ENCODE measurements at regions of chr3 and their contacts with region 1.

Region 1: GRCh38 chr3:44477312-44478030 is at the start of gene ZNF445:
- DNase-seq: peak; percentile 46 to 89 (median 73)
- ATAC-seq: peak; percentile 87
- H3K4me3 ChIP-seq: peak within 1 kb of the TSS; percentile 48 to 62
- H3K4me3 Mint-ChIP-seq: peak within 1 kb of the TSS; percentile 95
- H3K27ac ChIP-seq: peak within 1 kb of the TSS; percentile 8 to 16
- H3K27ac Mint-ChIP-seq: peak within 1 kb of the TSS; percentile 87
- H3K4me1 ChIP-seq: peaks cover 16% of the 10 kb centered on the region
- H3K4me1 Mint-ChIP-seq: peaks cover 42% of the 10 kb centered on the region
- H3K27me3 ChIP-seq: no peaks in the 10 kb centered on the region
- H3K27me3 Mint-ChIP-seq: no peaks in the 10 kb centered on the region
- CTCF ChIP-seq: no peak
- total RNA-seq, gene ZNF445: 4.8 to 5.2 TPM

Region 2: GRCh38 chr3:44323341-44323955 is 154.0 kb before region 1 on chr3:
- CTCF ChIA-PET with region 1: no interaction called
- POLR2A ChIA-PET with region 1: no interaction called
- intact Hi-C with region 1: loop called in 1 of 2 experiments (anchors 5 kb)
- DNase-seq: peak; percentile 6 to 68 (median 58)
- ATAC-seq: no peak
- H3K4me3 ChIP-seq: no peak overlapping the region
- H3K4me3 Mint-ChIP-seq: no peak overlapping the region
- H3K27ac ChIP-seq: no peak overlapping the region
- H3K27ac Mint-ChIP-seq: no peak overlapping the region
- H3K4me1 ChIP-seq: no peaks in the 10 kb centered on the region
- H3K4me1 Mint-ChIP-seq: no peaks in the 10 kb centered on the region
- H3K27me3 ChIP-seq: peaks cover 0 to 3% of the 10 kb centered on the region in 2 experiments
- H3K27me3 Mint-ChIP-seq: peaks cover 9% of the 10 kb centered on the region
- CTCF ChIP-seq: peak; percentile 86

Region 3: GRCh38 chr3:44439499-44440295 is 37.8 kb before region 1 on chr3:
- CTCF ChIA-PET with region 1: no interaction called
- POLR2A ChIA-PET with region 1: no interaction called
- intact Hi-C with region 1: loop called in 1 of 2 experiments (anchors 2 kb)
- DNase-seq: peak; percentile 24 to 91 (median 58)
- ATAC-seq: peak; percentile 86
- H3K4me3 ChIP-seq: peak overlapping the region in 1 of 2 experiments; percentile 33
- H3K4me3 Mint-ChIP-seq: peak overlapping the region; percentile 68
- H3K27ac ChIP-seq: peak overlapping the region; percentile 45 to 84
- H3K27ac Mint-ChIP-seq: peak overlapping the region; percentile 92
- H3K4me1 ChIP-seq: peaks cover 19% of the 10 kb centered on the region
- H3K4me1 Mint-ChIP-seq: peaks cover 31% of the 10 kb centered on the region
- H3K27me3 ChIP-seq: no peaks in the 10 kb centered on the region
- H3K27me3 Mint-ChIP-seq: no peaks in the 10 kb centered on the region
- CTCF ChIP-seq: no peak

Region 4: DNA sequence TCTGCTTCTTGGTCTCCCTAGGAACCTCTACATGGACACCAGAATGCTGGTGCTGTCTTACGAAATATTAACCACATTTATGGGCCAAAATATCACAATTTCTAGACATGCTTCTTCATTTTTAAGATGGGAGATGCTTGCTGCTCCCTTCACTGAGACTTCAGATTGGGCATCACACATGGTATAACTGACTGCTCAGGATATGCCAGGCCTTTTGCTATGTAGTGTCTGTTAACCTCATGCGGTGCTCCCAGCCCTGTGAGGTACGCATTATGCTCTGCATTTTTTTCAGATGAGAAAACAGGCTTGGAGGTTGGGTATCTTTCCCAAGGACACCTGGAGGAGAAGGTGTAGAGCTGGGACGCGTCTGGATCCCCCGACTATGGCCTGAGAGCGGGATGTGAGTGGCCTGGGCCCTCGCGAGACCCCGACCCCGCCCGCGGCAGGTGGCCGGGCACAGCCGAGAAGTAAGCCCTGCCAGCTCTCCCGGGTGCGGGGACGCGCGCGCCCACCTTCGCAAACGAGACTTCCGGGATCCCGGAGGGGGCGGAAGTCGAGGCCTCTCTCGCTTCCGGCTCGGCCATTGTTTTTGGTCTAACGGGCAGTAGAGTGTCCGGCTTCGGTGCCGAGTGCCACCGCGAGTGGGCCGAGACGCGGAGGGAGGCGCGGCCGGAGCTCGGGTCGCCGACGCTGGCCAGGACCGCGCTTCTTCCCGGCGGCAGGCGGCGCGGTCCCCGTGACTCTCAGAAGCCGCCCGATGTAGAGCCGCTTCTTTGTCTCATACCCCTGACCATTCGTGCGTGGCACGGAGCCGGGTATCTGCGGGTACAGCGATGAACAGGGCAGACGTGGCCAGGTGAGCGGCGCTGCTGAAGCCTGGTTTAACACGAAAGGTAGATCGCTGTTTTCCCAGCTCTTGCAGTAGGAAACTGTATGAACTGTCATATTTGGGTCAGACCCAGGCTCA is 77.4 kb after region 1 on chr3 and contains the start of gene ZKSCAN7:
- CTCF ChIA-PET with region 1: no interaction called
- POLR2A ChIA-PET with region 1: no interaction called
- intact Hi-C with region 1: loop called in 1 of 2 experiments (anchors 2 kb)
- DNase-seq: peak; percentile 20 to 79 (median 51)
- ATAC-seq: peak; percentile 74
- H3K4me3 ChIP-seq: peak within 1 kb of the TSS; percentile 76 to 88
- H3K4me3 Mint-ChIP-seq: peak within 1 kb of the TSS; percentile 93
- H3K27ac ChIP-seq: peak within 1 kb of the TSS; percentile 58 to 74
- H3K27ac Mint-ChIP-seq: peak within 1 kb of the TSS; percentile 92
- H3K4me1 ChIP-seq: peaks cover 9% of the 10 kb centered on the region
- H3K4me1 Mint-ChIP-seq: peaks cover 30% of the 10 kb centered on the region
- H3K27me3 ChIP-seq: no peaks in the 10 kb centered on the region
- H3K27me3 Mint-ChIP-seq: peaks cover 9% of the 10 kb centered on the region
- CTCF ChIP-seq: no peak
- total RNA-seq, gene ZKSCAN7: 0.68 to 1.6 TPM

Region 5: GRCh38 chr3:44976002-44976815 is 498.7 kb after region 1 on chr3 and contains the starts of genes EXOSC7 and ZDHHC3:
- CTCF ChIA-PET with region 1: no interaction called
- POLR2A ChIA-PET with region 1: no interaction called
- intact Hi-C with region 1: loop called in 1 of 2 experiments (anchors 1 kb)
- DNase-seq: peak; percentile 75 to 95 (median 86)
- ATAC-seq: peak; percentile 97
- H3K4me3 ChIP-seq: peak within 1 kb of the TSS; percentile 97 to 99
- H3K4me3 Mint-ChIP-seq: peak within 1 kb of the TSS; percentile 93
- H3K27ac ChIP-seq: peak within 1 kb of the TSS; percentile 90 to 94
- H3K27ac Mint-ChIP-seq: peak within 1 kb of the TSS; percentile 95
- H3K4me1 ChIP-seq: peaks cover 37% of the 10 kb centered on the region
- H3K4me1 Mint-ChIP-seq: peaks cover 65% of the 10 kb centered on the region
- H3K27me3 ChIP-seq: no peaks in the 10 kb centered on the region
- H3K27me3 Mint-ChIP-seq: no peaks in the 10 kb centered on the region
- CTCF ChIP-seq: no peak
- total RNA-seq, gene EXOSC7: 35.2 to 39.3 TPM
- total RNA-seq, gene ZDHHC3: 42.2 to 42.4 TPM